ENCODE measurements at regions of chr6 and their contacts with region 1.

Region 1: GRCh38 chr6:78984225-78984950 is 93.7 kb downstream of the PHIP start:
- DNase-seq: no peak
- ATAC-seq: no peak
- H3K4me3 ChIP-seq: no peak overlapping the region
- H3K4me3 Mint-ChIP-seq: no peak overlapping the region
- H3K27ac ChIP-seq: no peak overlapping the region
- H3K27ac Mint-ChIP-seq: peak overlapping the region in 1 of 9 donors; percentile 7
- H3K4me1 ChIP-seq: no peaks in the 10 kb centered on the region
- H3K4me1 Mint-ChIP-seq: peaks cover 0 to 16% (median 4%) of the 10 kb centered on the region in 7 donors
- H3K27me3 ChIP-seq: no peaks in the 10 kb centered on the region
- H3K27me3 Mint-ChIP-seq: no peaks in the 10 kb centered on the region

Region 2: DNA sequence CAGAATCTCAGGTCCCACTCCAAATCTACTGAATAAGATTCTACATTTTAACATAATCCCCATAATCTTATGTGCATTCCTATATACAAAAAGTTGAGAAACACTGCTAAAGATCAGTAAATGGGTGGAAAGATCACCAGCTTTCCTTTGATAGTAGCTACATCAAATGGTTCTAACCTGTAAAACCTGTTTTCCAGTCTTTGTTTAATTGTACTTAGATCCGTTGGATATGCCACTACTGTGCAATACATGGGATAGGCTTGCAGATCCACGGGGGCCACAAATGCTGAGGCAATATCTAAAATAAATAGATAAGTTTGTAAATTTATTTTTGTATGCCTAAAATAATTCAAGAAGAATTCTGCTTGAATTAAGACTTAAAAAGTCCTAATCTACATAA is 22.9 kb before region 1 on chr6:
- CTCF ChIA-PET with region 1: interaction called, 3 read pairs
- POLR2A ChIA-PET with region 1: no interaction called
- intact Hi-C with region 1: loop called in 1 of 2 experiments (anchors 2 kb)
- DNase-seq: no peak
- ATAC-seq: no peak
- H3K4me3 ChIP-seq: no peak overlapping the region
- H3K4me3 Mint-ChIP-seq: no peak overlapping the region
- H3K27ac ChIP-seq: no peak overlapping the region
- H3K27ac Mint-ChIP-seq: no peak overlapping the region
- H3K4me1 ChIP-seq: no peaks in the 10 kb centered on the region
- H3K4me1 Mint-ChIP-seq: peaks cover 0 to 3% (median 0%) of the 10 kb centered on the region in 7 donors
- H3K27me3 ChIP-seq: no peaks in the 10 kb centered on the region
- H3K27me3 Mint-ChIP-seq: no peaks in the 10 kb centered on the region

Region 3: DNA sequence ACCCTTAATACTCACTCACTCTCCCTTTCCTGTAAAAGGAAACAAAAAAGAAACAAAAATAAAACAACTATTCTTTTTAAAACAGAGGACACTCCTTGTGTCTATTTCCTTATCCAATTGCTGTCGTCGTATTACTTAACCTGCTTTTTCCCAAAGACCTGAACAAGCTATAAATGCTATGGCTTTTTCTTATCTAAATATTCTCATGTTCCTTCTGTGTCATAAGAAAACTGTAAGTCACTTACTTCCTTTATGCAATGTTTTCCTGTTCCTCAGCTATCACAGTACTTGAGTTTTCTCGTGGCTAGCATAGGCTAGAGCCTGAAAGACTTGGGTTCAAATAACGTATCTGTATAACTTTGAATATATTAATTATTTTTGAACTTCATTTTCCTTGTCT is 17.8 kb before region 1 on chr6:
- CTCF ChIA-PET with region 1: interaction called, 3 read pairs
- POLR2A ChIA-PET with region 1: no interaction called
- intact Hi-C with region 1: loop called in 1 of 2 experiments (anchors 2 kb)
- DNase-seq: no peak
- ATAC-seq: no peak
- H3K4me3 ChIP-seq: no peak overlapping the region
- H3K4me3 Mint-ChIP-seq: no peak overlapping the region
- H3K27ac ChIP-seq: no peak overlapping the region
- H3K27ac Mint-ChIP-seq: peak overlapping the region in 3 of 9 donors; percentile 4 to 64 (median 38)
- H3K4me1 ChIP-seq: no peaks in the 10 kb centered on the region
- H3K4me1 Mint-ChIP-seq: peaks cover 0 to 3% (median 0%) of the 10 kb centered on the region in 7 donors
- H3K27me3 ChIP-seq: no peaks in the 10 kb centered on the region
- H3K27me3 Mint-ChIP-seq: no peaks in the 10 kb centered on the region

Measured in naive thymus-derived CD4-positive, alpha-beta T cell (primary cell).